PC-3 (cell line): ENCODE measurements at regions of chr15 and their contacts with region 1.

Region 1: GRCh38 chr15:45611305-45611704 is 23.5 kb upstream of the SQOR start:
- DNase-seq: peak; percentile 56
- ATAC-seq: no peak; the same call in 1 of the 2 replicates
- H3K4me3 ChIP-seq: no peak overlapping the region
- H3K27ac ChIP-seq: no peak overlapping the region
- H3K4me1 ChIP-seq: peaks cover 12% of the 10 kb centered on the region
- H3K27me3 ChIP-seq: no peaks in the 10 kb centered on the region
- CTCF ChIP-seq: peak; percentile 69

Region 2: GRCh38 chr15:45346381-45346780 is 264.9 kb before region 1 on chr15:
- CTCF ChIA-PET with region 1: no interaction called
- POLR2A ChIA-PET with region 1: no interaction called
- intact Hi-C with region 1: no loop called
- DNase-seq: no peak
- ATAC-seq: no peak
- H3K4me3 ChIP-seq: no peak overlapping the region
- H3K27ac ChIP-seq: no peak overlapping the region
- H3K4me1 ChIP-seq: peaks cover 31% of the 10 kb centered on the region
- H3K27me3 ChIP-seq: no peaks in the 10 kb centered on the region
- CTCF ChIP-seq: no peak

Region 3: GRCh38 chr15:45522328-45523160 is 88.8 kb before region 1 on chr15 and contains the start of gene SLC30A4:
- CTCF ChIA-PET with region 1: no interaction called
- POLR2A ChIA-PET with region 1: no interaction called
- intact Hi-C with region 1: loop called (anchors 5 kb)
- DNase-seq: peak; percentile 38
- ATAC-seq: peak; percentile 83
- H3K4me3 ChIP-seq: peak within 1 kb of the TSS; percentile 77
- H3K27ac ChIP-seq: no peak within 1 kb of the TSS
- H3K4me1 ChIP-seq: no peaks in the 10 kb centered on the region
- H3K27me3 ChIP-seq: no peaks in the 10 kb centered on the region
- CTCF ChIP-seq: no peak
- total RNA-seq, gene SLC30A4: 1.3 and 1.4 TPM in 2 replicates

Region 4: GRCh38 chr15:45549541-45550220 is 61.6 kb before region 1 on chr15:
- CTCF ChIA-PET with region 1: no interaction called
- POLR2A ChIA-PET with region 1: interaction called, 3 read pairs
- intact Hi-C with region 1: loop called (anchors 5 kb)
- DNase-seq: peak; percentile 84
- ATAC-seq: peak; percentile 94
- H3K4me3 ChIP-seq: 0 out of 2 replicates have a peak overlapping the region, but pooled peaks have one; percentile 3
- H3K27ac ChIP-seq: peak overlapping the region; percentile 70
- H3K4me1 ChIP-seq: peaks cover 7% of the 10 kb centered on the region
- H3K27me3 ChIP-seq: no peaks in the 10 kb centered on the region
- CTCF ChIP-seq: no peak